ENCODE measurements at regions of chr21 and their contacts with region 1.

Region 1: GRCh38 chr21:46087641-46088040 is 10.3 kb upstream of the COL6A2 start:
- DNase-seq: no peak
- ATAC-seq: no peak
- H3K4me3 ChIP-seq: no peak overlapping the region
- H3K4me3 Mint-ChIP-seq: no peak overlapping the region
- H3K27ac ChIP-seq: no peak overlapping the region
- H3K27ac Mint-ChIP-seq: no peak overlapping the region
- H3K4me1 ChIP-seq: no peaks in the 10 kb centered on the region
- H3K4me1 Mint-ChIP-seq: no peaks in the 10 kb centered on the region
- H3K27me3 ChIP-seq: no peaks in the 10 kb centered on the region
- H3K27me3 Mint-ChIP-seq: no peaks in the 10 kb centered on the region
- CTCF ChIP-seq: no peak

Region 2: GRCh38 chr21:45874716-45875415 is 212.8 kb before region 1 on chr21:
- CTCF ChIA-PET with region 1: no interaction called
- POLR2A ChIA-PET with region 1: no interaction called
- intact Hi-C with region 1: no loop called
- DNase-seq: no peak
- ATAC-seq: no peak
- H3K4me3 ChIP-seq: no peak overlapping the region
- H3K4me3 Mint-ChIP-seq: no peak overlapping the region
- H3K27ac ChIP-seq: no peak overlapping the region
- H3K27ac Mint-ChIP-seq: no peak overlapping the region
- H3K4me1 ChIP-seq: peaks cover 3% of the 10 kb centered on the region
- H3K4me1 Mint-ChIP-seq: peaks cover 7% of the 10 kb centered on the region
- H3K27me3 ChIP-seq: peaks cover 0 to 12% of the 10 kb centered on the region in 2 experiments
- H3K27me3 Mint-ChIP-seq: peaks cover 6% of the 10 kb centered on the region
- CTCF ChIP-seq: no peak

Region 3: GRCh38 chr21:46110499-46111192 is 23.0 kb after region 1 on chr21:
- CTCF ChIA-PET with region 1: no interaction called
- POLR2A ChIA-PET with region 1: no interaction called
- intact Hi-C with region 1: loop called in 1 of 2 experiments (anchors 1 kb)
- DNase-seq: peak in 3 of 9 experiments; percentile 5 to 40 (median 6)
- ATAC-seq: no peak
- H3K4me3 ChIP-seq: no peak overlapping the region
- H3K4me3 Mint-ChIP-seq: no peak overlapping the region
- H3K27ac ChIP-seq: no peak overlapping the region
- H3K27ac Mint-ChIP-seq: no peak overlapping the region
- H3K4me1 ChIP-seq: no peaks in the 10 kb centered on the region
- H3K4me1 Mint-ChIP-seq: no peaks in the 10 kb centered on the region
- H3K27me3 ChIP-seq: no peaks in the 10 kb centered on the region
- H3K27me3 Mint-ChIP-seq: no peaks in the 10 kb centered on the region
- CTCF ChIP-seq: no peak